ENCODE measurements at regions of chr13 and their contacts with region 1.

Region 1: GRCh38 chr13:98598043-98598442 is 21.1 kb upstream of the STK24 start:
- DNase-seq: no peak
- H3K4me3 ChIP-seq: no peak overlapping the region
- H3K27ac ChIP-seq: no peak overlapping the region
- H3K4me1 ChIP-seq: no peaks in the 10 kb centered on the region
- H3K27me3 ChIP-seq: no peaks in the 10 kb centered on the region
- CTCF ChIP-seq: no peak
- POLR2A ChIP-seq: no peak

Region 2: DNA sequence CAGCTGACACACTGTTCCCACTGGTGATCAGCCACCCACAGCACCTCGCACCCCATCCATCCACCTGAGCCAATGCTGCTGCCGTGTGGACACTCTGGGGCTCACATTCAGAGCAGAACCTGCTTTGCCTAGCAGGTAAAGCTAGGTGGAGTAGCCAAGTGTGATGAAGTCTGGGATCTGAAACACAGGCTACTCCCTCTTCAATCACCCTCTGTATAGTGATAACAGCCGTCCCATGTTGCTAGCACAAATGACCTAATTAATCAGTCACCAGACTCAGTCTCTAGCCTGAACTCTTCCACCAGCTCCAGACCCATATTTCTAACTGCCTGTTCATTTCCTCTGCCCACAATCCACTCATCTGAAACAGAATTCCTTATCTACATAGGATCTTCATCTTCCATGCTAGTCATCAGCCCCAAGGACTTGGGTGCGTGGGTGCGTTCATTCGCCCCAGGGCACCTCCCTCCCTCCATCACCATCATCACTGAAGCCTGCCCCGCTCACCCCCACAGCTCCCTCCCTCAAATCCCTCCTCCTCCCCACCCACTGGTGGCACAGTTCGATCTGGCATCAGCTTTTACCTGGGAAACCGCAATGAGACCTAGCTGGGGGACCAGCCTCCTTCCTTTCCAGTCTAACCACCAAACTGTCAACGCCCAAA is 40.9 kb before region 1 on chr13:
- intact Hi-C with region 1: loop called (anchors 1 kb)
- DNase-seq: no peak
- H3K4me3 ChIP-seq: no peak overlapping the region
- H3K27ac ChIP-seq: no peak overlapping the region
- H3K4me1 ChIP-seq: peaks cover 0 to 19% of the 10 kb centered on the region in 2 donors
- H3K27me3 ChIP-seq: no peaks in the 10 kb centered on the region
- CTCF ChIP-seq: no peak
- POLR2A ChIP-seq: no peak

Region 3: GRCh38 chr13:98650391-98651107 is 52.5 kb after region 1 on chr13:
- intact Hi-C with region 1: no loop called
- DNase-seq: peak in 1 of 2 donors; percentile 66
- H3K4me3 ChIP-seq: no peak overlapping the region
- H3K27ac ChIP-seq: peak overlapping the region; percentile 46 to 64
- H3K4me1 ChIP-seq: no peaks in the 10 kb centered on the region
- H3K27me3 ChIP-seq: no peaks in the 10 kb centered on the region
- CTCF ChIP-seq: no peak
- POLR2A ChIP-seq: no peak